Astrocyte of the cerebellum (primary cell): ENCODE measurements at regions of chr22 and their contacts with region 1.

Region 1: GRCh38 chr22:39482768-39483167 is 19.3 kb upstream of the MIEF1 start:
- DNase-seq: no peak
- H3K4me3 ChIP-seq: no peak overlapping the region
- CTCF ChIP-seq: no peak

Region 2: GRCh38 chr22:39422101-39422500 is 60.7 kb before region 1 on chr22:
- in situ Hi-C with region 1: loop called (anchors 5 kb)
- DNase-seq: no peak
- H3K4me3 ChIP-seq: no peak overlapping the region
- CTCF ChIP-seq: no peak

Region 3: GRCh38 chr22:39446295-39446721 is 36.5 kb before region 1 on chr22:
- in situ Hi-C with region 1: no loop called
- DNase-seq: no peak
- H3K4me3 ChIP-seq: no peak overlapping the region
- CTCF ChIP-seq: no peak

Region 4: DNA sequence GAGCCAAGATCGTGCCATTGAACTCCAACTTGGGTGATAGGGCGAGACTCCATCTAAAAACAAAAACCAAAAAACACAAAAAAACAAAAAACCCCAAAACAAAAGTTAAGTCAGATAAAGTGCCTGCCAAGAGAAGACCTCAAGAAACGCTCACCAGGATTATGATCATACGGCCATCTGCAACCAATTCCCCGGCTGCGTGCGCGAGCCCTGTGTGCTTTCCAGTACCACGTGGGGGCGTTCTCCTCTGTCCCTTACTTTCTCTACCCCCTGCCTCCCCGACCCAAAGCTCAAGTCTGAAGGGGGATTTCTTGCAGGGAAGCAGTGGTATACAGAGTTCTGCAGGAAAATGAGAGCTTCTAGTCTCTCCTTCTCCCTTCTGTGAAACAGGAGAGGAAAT is 60.3 kb after region 1 on chr22:
- in situ Hi-C with region 1: no loop called
- DNase-seq: no peak
- H3K4me3 ChIP-seq: no peak overlapping the region
- CTCF ChIP-seq: peak; percentile 62